ENCODE measurements at regions of chr11 and their contacts with region 1.

Region 1: DNA sequence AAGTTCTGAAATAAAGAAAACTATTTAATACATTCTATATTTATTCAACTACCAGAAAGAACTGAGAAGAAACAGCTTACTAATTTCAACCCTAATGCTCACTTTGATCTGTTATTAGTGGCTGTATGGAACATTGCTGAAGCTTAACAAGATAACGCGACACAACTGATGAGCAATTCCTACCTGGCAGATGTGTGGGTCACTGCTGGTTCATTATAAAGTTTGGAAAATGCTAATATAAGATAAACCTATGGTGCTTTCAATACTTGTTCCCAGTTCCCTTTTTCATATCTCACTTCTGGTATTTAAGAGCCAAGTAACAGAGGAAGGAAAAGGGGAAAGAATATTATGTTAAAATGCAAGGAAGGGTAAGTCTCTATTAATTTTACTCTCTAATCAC is 10.5 kb downstream of the CTSC start:
- DNase-seq: no peak
- ATAC-seq: no peak
- H3K4me3 ChIP-seq: no peak overlapping the region
- H3K27ac ChIP-seq: no peak overlapping the region
- H3K4me1 ChIP-seq: no peaks in the 10 kb centered on the region
- H3K27me3 ChIP-seq: no peaks in the 10 kb centered on the region
- CTCF ChIP-seq: no peak

Region 2: GRCh38 chr11:87775036-87775435 is 552.0 kb before region 1 on chr11:
- CTCF ChIA-PET with region 1: no interaction called
- POLR2A ChIA-PET with region 1: no interaction called
- in situ Hi-C with region 1: no loop called
- intact Hi-C with region 1: no loop called
- DNase-seq: no peak
- ATAC-seq: no peak
- H3K4me3 ChIP-seq: no peak overlapping the region
- H3K27ac ChIP-seq: no peak overlapping the region
- H3K4me1 ChIP-seq: no peaks in the 10 kb centered on the region
- H3K27me3 ChIP-seq: no peaks in the 10 kb centered on the region
- CTCF ChIP-seq: no peak

Region 3: GRCh38 chr11:88297863-88298262 is 29.2 kb before region 1 on chr11:
- CTCF ChIA-PET with region 1: no interaction called
- POLR2A ChIA-PET with region 1: no interaction called
- in situ Hi-C with region 1: no loop called
- intact Hi-C with region 1: no loop called
- DNase-seq: no peak
- ATAC-seq: no peak
- H3K4me3 ChIP-seq: no peak overlapping the region
- H3K27ac ChIP-seq: no peak overlapping the region
- H3K4me1 ChIP-seq: no peaks in the 10 kb centered on the region
- H3K27me3 ChIP-seq: no peaks in the 10 kb centered on the region
- CTCF ChIP-seq: no peak

Region 4: DNA sequence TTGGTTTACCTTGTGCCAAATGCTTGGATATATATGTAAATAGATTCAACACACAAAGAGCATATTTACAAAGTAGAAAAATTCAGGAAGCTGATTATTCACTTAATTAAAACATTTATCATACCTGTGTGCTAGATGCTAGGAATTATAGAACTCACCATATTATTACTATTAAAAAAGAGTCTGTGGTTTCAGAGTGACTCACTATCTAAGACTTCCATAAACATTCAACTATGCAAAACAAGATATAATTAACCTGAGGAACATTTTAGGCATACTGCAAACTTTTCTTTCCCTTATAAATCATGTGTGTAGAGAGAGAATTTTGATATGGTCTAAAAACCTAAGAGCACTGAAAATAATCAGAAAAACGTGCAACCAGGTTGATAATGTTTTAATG is 16.8 kb before region 1 on chr11:
- CTCF ChIA-PET with region 1: no interaction called
- POLR2A ChIA-PET with region 1: no interaction called
- in situ Hi-C with region 1: no loop called
- intact Hi-C with region 1: loop called (anchors 2 kb)
- DNase-seq: no peak
- ATAC-seq: no peak
- H3K4me3 ChIP-seq: no peak overlapping the region
- H3K27ac ChIP-seq: no peak overlapping the region
- H3K4me1 ChIP-seq: no peaks in the 10 kb centered on the region
- H3K27me3 ChIP-seq: no peaks in the 10 kb centered on the region
- CTCF ChIP-seq: no peak

Region 5: DNA sequence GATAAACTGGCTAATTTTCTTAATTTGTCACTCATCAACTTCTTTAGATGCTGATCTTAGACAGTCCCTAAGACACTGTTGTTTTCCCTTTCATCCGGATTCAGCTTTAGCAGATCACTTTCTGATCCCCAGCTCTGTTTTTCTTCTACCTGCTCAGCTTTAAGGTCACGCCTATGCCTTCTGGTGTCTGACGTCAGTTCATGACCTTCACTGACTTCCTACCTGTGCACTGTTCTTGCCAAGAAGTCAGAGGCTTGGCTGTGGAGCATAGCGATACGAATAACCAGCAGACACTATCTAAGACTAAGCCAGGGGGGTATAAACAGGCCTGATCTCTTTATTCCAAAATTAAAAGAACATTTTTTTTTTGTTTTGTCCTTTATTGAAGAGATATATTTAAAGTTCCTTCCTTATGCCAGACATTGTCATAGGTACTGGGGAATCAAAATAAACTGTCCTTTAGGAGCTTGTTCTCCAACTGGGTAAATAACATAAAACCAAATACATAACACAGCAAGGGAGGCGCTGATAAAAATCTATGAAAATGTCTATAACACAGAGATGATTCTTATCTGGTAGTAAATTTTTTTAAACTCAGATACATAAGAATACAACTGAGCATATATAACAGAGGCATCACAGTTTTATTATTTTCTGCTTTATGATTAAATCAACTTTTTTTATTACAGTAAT is 362.6 kb after region 1 on chr11:
- CTCF ChIA-PET with region 1: no interaction called
- POLR2A ChIA-PET with region 1: no interaction called
- in situ Hi-C with region 1: no loop called
- intact Hi-C with region 1: loop called (anchors 5 kb)
- DNase-seq: no peak
- ATAC-seq: no peak
- H3K4me3 ChIP-seq: no peak overlapping the region
- H3K27ac ChIP-seq: no peak overlapping the region
- H3K4me1 ChIP-seq: no peaks in the 10 kb centered on the region
- H3K27me3 ChIP-seq: no peaks in the 10 kb centered on the region
- CTCF ChIP-seq: no peak